Right ventricle myocardium inferior (tissue), 1 donor: ENCODE measurements at regions of chr6 and their contacts with region 1.

Region 1: DNA sequence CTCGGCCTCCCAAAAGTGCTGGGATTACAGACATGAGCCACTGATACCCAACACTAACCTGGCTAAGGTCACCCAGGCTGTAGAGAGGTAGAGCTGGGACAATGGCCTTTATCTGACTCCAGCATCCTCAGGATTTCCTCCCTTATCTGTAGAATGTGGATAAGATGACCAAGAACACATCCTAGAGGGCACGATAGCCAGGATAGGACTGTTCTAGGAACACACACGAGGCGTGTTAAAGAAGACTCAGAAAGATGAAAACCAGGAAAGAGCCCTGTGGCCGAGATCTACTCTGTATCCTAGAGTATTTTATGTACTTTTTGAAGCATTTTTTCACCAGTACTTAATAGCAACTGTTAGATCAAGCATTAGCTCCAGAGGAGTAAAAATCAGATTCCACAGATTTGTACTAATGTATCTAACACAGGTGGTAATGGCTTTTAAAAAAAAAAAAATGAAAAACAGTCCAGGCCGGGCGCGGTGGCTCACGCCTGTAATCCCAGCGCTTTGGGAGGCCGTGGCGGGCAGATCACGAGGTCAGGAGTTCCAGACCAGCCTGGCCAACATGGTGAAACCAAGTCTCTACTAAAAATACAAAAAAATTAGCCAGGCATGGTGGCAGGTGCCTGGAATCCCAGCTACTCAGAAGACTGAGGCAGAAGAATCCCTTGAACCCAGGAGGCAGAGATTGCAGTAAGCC is 17.3 kb downstream of the PPP1R10 start:
- DNase-seq: no peak
- ATAC-seq: no peak

Region 2: DNA sequence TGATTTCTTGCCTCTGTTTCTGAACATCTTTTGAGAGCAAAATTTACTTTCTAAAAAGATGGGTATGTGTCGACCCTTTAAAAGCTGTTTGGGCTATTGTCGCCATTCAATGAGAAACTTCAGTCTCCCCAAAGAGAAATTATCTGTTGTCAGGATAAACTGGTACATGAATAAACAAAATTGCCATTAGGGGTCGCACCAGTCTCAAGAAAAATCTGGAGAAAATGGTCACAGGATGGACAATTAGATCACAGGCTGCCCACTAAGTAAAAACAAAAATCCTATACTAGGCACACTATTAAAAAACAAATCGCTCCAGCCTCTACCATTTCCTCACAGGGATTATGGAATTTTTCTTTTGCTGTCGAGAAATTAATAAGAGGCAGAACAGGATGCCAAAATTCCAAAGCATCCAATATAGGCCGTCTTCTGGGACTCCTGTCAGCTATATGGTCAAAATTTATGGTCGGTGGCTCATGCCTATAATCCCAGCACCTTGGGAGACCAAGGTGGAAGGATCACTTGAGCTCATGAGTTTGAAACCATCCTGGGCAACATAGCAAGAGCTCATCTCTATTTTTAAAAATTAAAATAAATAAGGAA is 116.0 kb before region 1 on chr6:
- intact Hi-C with region 1: loop called (anchors 5 kb)
- DNase-seq: no peak
- ATAC-seq: no peak